Activated CD8-positive, alpha-beta T cell treated with anti-CD3 and anti-CD28 coated beads for 36 hours (primary cell): ENCODE measurements at regions of chr11 and their contacts with region 1.

Region 1: GRCh38 chr11:14764579-14765527 is 121.2 kb downstream of the PDE3B start:
- DNase-seq: peak; percentile 66
- ATAC-seq: peak; percentile 64
- H3K4me3 Mint-ChIP-seq: peak overlapping the region; percentile 64
- H3K27ac Mint-ChIP-seq: no peak overlapping the region
- H3K4me1 Mint-ChIP-seq: peaks cover 47% of the 10 kb centered on the region
- H3K27me3 Mint-ChIP-seq: no peaks in the 10 kb centered on the region
- CTCF ChIP-seq: no peak

Region 2: DNA sequence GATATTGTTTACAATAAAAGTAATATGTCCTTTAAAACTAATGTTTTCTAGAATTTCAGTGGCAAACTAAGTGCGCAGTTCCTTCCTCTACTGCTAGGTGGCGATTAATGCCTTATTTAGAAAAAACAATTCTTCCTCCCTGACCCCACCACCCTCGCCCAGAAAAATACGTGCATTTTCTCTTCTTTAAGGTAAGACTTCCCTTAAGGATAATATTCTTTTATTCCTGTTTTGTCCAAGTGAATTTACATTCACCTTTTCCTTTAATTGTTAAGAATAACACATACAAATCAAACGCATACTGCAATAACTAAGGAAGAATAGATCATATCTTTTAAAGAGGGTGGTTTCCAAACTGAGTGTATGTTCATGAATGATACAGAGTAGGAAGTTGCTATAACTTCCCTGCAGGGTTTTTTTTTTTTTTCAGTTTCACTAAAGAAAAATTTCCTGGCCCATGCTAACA is 227.7 kb before region 1 on chr11:
- CTCF ChIA-PET with region 1: interaction called, 4 read pairs
- POLR2A ChIA-PET with region 1: no interaction called
- intact Hi-C with region 1: loop called (anchors 10 kb)
- DNase-seq: peak; percentile 70
- ATAC-seq: peak; percentile 83
- H3K4me3 Mint-ChIP-seq: peak overlapping the region; percentile 64
- H3K27ac Mint-ChIP-seq: peak overlapping the region; percentile 92
- H3K4me1 Mint-ChIP-seq: peaks cover 44% of the 10 kb centered on the region
- H3K27me3 Mint-ChIP-seq: no peaks in the 10 kb centered on the region
- CTCF ChIP-seq: peak; percentile 90

Region 3: GRCh38 chr11:14892036-14892567 is 127.2 kb after region 1 on chr11 and contains the start of gene CYP2R1:
- CTCF ChIA-PET with region 1: interaction called, 3 read pairs
- POLR2A ChIA-PET with region 1: interaction called, 10 read pairs
- intact Hi-C with region 1: loop called (anchors 10 kb)
- DNase-seq: peak; percentile 94
- ATAC-seq: peak; percentile 84
- H3K4me3 Mint-ChIP-seq: peak within 1 kb of the TSS; percentile 91
- H3K27ac Mint-ChIP-seq: peak within 1 kb of the TSS; percentile 100
- H3K4me1 Mint-ChIP-seq: peaks cover 54% of the 10 kb centered on the region
- H3K27me3 Mint-ChIP-seq: no peaks in the 10 kb centered on the region
- CTCF ChIP-seq: no peak
- total RNA-seq, gene CYP2R1: 12.9 to 13.9 TPM